HAP-1 (cell line): ENCODE measurements at regions of chr1 and their contacts with region 1.

Region 1: DNA sequence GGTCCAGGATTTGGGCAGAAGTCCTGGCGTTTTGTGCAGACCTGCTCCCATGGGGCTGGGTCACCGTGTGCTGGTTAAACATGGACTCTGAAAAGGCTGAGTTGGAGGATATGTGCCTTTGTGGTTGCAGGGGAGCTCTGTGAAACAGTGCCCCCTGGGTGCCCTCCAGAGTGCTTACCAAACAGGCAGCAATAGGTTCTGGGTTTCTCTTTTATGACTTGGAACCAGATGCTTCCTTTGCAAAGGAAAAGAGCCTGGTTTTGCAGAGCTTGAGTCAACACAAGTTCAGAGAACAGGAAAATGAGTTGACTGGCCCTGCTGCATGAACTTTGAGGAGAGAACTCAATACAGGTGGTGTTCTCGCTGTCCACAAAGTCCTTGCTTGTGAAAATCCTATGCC is 288.9 kb downstream of the TM2D1 start:
- DNase-seq: peak in 1 of 2 experiments; percentile 15
- H3K4me3 ChIP-seq: no peak overlapping the region
- H3K4me1 ChIP-seq: peaks cover 8% of the 10 kb centered on the region
- H3K27me3 ChIP-seq: no peaks in the 10 kb centered on the region

Region 2: GRCh38 chr1:61378494-61379180 is 57.4 kb before region 1 on chr1:
- in situ Hi-C with region 1: loop called (anchors 10 kb)
- DNase-seq: no peak
- H3K4me3 ChIP-seq: no peak overlapping the region
- H3K4me1 ChIP-seq: 0 out of 2 replicates have a peak, but pooled peaks cover 3% of the 10 kb centered on the region
- H3K27me3 ChIP-seq: no peaks in the 10 kb centered on the region

Region 3: DNA sequence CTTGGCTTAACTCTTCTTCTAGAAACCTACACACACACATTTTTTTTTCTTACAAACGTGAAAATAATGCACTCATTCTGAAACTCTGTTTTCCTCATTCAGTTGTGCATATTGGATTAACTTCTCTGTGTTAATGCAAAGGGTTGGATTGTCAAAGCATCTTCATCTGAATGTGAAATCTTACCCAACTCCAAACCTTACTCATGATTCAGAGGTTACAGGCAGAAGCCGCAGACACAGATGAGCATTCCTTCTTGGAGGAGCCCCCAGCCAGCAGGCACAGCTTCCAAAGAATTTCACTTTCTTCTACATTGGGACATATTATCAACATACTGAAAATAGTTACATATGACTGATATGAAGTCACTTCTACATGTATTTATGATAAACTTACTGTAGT is 321.9 kb after region 1 on chr1:
- in situ Hi-C with region 1: no loop called
- DNase-seq: no peak
- H3K4me3 ChIP-seq: no peak overlapping the region
- H3K4me1 ChIP-seq: peaks cover 8% of the 10 kb centered on the region
- H3K27me3 ChIP-seq: no peaks in the 10 kb centered on the region